A549 (cell line): ENCODE measurements at regions of chr16 and their contacts with region 1.

Region 1: GRCh38 chr16:70653809-70654771 is 7.7 kb downstream of the IL34 start:
- DNase-seq: peak; percentile 41 to 78
- ATAC-seq: peak; percentile 80 to 85
- H3K4me3 ChIP-seq: peak overlapping the region; percentile 29; the same call in 2 of the 3 replicates
- H3K27ac ChIP-seq: peak overlapping the region; percentile 57 to 73; a peak in 5 of 6 replicates
- H3K4me1 ChIP-seq: no peaks in the 10 kb centered on the region; the same call in 2 of the 3 replicates
- CTCF ChIP-seq: peak; percentile 94
- EP300 ChIP-seq: no peak
- POLR2A ChIP-seq: no peak
- RAD21 ChIP-seq: peak; percentile 92 to 97

Region 2: DNA sequence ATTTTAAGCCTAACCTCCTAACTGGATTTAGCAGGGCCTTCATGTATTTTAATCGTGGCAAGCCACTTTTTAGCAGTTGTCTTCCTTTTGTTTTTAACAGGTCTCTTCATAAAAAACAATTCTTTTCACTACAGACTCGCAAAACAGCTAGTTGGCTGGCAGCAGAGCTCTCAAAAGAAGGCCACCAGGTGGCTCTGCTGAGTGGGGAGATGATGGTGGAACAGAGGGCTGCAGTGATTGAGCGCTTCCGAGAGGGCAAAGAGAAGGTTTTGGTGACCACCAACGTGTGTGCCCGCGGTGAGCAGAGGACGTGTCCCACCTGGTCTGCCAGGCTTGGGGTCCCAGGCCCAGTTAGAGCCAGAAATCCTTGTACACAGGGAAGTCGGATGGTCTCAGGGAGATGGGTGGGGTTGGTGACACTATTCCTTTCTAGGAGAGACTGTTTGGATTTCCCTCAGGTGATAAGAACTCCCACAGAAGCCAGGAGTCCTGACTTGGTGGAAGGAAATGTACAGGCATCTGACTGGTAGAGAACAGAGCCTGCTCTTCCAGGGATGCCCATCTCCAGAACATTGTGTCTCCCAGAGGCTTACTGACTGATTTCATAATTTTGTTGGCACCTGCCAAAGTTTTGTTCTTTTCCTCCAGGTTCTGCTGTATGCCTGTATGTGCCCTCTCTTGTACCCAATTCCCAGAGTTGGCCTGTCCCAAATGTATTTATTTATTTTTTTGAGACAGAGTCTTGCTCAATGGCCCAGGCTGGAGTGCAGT is 322.3 kb before region 1 on chr16:
- CTCF ChIA-PET with region 1: interaction called, 10 read pairs
- POLR2A ChIA-PET with region 1: no interaction called
- DNase-seq: no peak
- ATAC-seq: peak; percentile 91
- H3K4me3 ChIP-seq: no peak overlapping the region
- H3K27ac ChIP-seq: peak overlapping the region in 1 of 2 experiments; percentile 55; a peak in 3 of 6 replicates
- H3K4me1 ChIP-seq: peaks cover 4% of the 10 kb centered on the region; the same call in 1 of the 3 replicates
- CTCF ChIP-seq: peak; percentile 50
- EP300 ChIP-seq: no peak
- POLR2A ChIP-seq: no peak
- RAD21 ChIP-seq: peak; percentile 29 to 34; a peak in 2 of 5 replicates

Region 3: GRCh38 chr16:70496513-70496912 is 157.6 kb before region 1 on chr16:
- CTCF ChIA-PET with region 1: interaction called, 10 read pairs
- POLR2A ChIA-PET with region 1: no interaction called
- DNase-seq: no peak
- ATAC-seq: no peak; a peak in 1 of 6 replicates
- H3K4me3 ChIP-seq: no peak overlapping the region
- H3K27ac ChIP-seq: no peak overlapping the region
- H3K4me1 ChIP-seq: no peaks in the 10 kb centered on the region
- CTCF ChIP-seq: no peak
- EP300 ChIP-seq: no peak
- POLR2A ChIP-seq: no peak
- RAD21 ChIP-seq: no peak

Region 4: DNA sequence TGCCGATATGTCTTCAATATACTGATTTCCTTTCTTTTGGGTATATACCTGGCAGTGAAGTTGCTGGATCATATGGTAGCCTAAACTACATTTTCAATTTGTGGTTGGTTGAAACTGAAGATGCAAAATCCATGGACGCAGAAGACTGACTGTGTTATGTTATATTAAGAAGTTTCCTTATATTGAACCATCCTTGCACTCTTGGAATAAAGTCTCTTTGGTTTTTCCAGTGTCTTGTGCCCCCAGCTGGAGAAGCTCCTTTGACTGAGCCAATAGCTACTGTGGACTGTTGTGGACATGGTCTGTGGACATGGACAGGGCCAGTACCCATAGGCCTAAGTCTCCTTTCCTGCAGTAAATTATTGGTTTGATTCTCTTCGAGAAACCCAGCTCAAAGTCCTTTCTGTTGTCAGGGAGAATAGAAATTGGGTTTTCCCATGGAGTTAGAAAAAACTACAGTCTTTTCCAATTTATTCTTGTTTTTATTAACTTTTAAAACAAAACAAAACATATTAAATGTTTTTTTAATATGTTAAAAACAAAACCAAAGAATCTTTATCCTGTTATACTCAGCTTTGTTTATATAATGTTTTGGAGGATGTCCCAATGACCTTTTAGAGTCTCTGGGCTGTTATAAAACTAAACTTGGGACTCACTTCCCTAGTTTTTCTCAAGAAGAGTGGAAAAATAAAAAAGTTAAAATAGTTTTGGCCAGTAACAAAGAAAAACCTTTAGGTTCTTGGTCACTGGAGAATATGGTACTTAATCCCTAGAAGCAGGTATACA is 22.9 kb before region 1 on chr16:
- CTCF ChIA-PET with region 1: interaction called, 22 read pairs
- POLR2A ChIA-PET with region 1: no interaction called
- DNase-seq: no peak
- ATAC-seq: no peak
- H3K4me3 ChIP-seq: no peak overlapping the region
- H3K27ac ChIP-seq: no peak overlapping the region
- H3K4me1 ChIP-seq: no peaks in the 10 kb centered on the region
- CTCF ChIP-seq: no peak
- EP300 ChIP-seq: no peak
- POLR2A ChIP-seq: no peak
- RAD21 ChIP-seq: no peak

Region 5: DNA sequence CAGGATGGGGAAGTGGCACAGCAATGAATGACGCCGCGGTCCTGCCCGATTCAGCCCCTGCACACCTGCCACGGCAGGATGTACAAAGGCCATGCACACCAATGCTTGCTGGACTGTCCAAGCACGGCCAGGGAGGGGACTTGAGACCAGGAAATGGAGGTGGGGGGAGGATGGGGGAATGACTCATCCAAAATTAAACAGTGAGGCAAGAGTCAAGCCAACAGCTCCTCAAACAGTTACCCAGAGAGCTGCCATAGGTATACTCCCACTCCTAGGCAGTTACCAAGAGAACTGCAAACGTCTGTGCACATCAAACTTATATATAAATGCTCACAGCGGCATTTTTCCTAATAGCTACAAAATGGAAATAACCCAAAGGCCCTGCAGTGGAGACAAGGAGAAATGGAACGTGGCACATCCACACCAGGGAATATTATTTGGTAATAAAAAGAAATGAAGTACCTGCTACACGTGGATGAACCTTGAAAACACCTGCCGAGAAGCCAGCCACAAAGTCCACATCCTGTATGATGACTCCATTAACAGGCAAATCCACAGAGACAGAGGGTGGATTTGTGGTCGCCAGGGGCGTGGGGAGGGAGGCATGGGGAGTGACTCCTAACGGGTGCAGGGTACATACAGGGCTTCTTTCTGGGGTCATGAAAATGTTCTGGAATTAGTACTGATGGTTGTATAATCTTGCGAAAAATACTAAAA is 92.8 kb after region 1 on chr16:
- CTCF ChIA-PET with region 1: interaction called, 15 read pairs
- POLR2A ChIA-PET with region 1: no interaction called
- DNase-seq: peak; percentile 91 to 95
- ATAC-seq: peak; percentile 83 to 88
- H3K4me3 ChIP-seq: no peak overlapping the region
- H3K27ac ChIP-seq: peak overlapping the region; percentile 94 to 97
- H3K4me1 ChIP-seq: peaks cover 71% of the 10 kb centered on the region
- CTCF ChIP-seq: no peak
- EP300 ChIP-seq: peak; percentile 32 to 66; a peak in 1 of 5 replicates
- POLR2A ChIP-seq: peak; percentile 11; the same call in 1 of the 2 replicates
- RAD21 ChIP-seq: peak; percentile 22 to 32; a peak in 2 of 5 replicates